ENCODE measurements at regions of chr17 and their contacts with region 1.

Region 1: GRCh38 chr17:28644985-28645939 is at the start of gene BLTP2:
- DNase-seq: peak; percentile 96
- H3K4me3 Mint-ChIP-seq: peak within 1 kb of the TSS; percentile 84
- H3K27ac Mint-ChIP-seq: peak within 1 kb of the TSS; percentile 86
- H3K4me1 Mint-ChIP-seq: peaks cover 36% of the 10 kb centered on the region
- H3K27me3 Mint-ChIP-seq: no peaks in the 10 kb centered on the region
- total RNA-seq, gene BLTP2: 89.4 to 92.0 TPM

Region 2: GRCh38 chr17:28384281-28385036 is 260.8 kb before region 1 on chr17:
- CTCF ChIA-PET with region 1: no interaction called
- intact Hi-C with region 1: loop called (anchors 1 kb)
- DNase-seq: peak; percentile 81
- H3K4me3 Mint-ChIP-seq: peak overlapping the region; percentile 87
- H3K27ac Mint-ChIP-seq: peak overlapping the region; percentile 9
- H3K4me1 Mint-ChIP-seq: peaks cover 23% of the 10 kb centered on the region
- H3K27me3 Mint-ChIP-seq: peaks cover 12% of the 10 kb centered on the region

Region 3: DNA sequence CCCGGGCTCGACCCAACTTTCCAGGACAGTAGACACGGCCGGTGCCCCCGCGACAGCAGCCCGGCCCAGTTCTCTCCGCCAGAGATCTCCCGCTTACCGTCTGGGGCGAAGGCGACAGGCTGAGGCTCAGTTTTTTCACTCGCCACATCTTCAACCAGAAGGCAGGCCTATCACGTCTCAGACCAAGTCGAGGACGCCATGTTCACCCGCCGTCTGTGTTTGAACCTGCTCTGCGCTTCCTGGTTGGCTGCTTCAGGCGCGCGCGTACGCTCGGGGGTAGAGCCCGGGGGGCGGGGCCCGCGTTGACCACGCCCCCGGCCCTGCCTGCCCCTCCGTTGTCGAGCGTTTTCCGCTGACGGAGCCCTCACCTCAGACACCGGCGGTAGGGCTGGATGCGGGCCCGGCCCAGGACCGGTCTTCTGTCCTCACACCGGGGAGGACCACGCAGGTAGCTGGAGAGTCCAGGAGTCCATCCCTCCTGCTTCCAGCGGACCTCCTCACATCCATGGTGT is 46.4 kb before region 1 on chr17 and contains the start of gene SPAG5:
- CTCF ChIA-PET with region 1: interaction called, 5 read pairs
- intact Hi-C with region 1: loop called (anchors 1 kb)
- DNase-seq: peak; percentile 96
- H3K4me3 Mint-ChIP-seq: peak within 1 kb of the TSS; percentile 95
- H3K27ac Mint-ChIP-seq: peak within 1 kb of the TSS; percentile 94
- H3K4me1 Mint-ChIP-seq: peaks cover 15% of the 10 kb centered on the region
- H3K27me3 Mint-ChIP-seq: no peaks in the 10 kb centered on the region
- total RNA-seq, gene SPAG5: 210 to 216 TPM

Region 4: DNA sequence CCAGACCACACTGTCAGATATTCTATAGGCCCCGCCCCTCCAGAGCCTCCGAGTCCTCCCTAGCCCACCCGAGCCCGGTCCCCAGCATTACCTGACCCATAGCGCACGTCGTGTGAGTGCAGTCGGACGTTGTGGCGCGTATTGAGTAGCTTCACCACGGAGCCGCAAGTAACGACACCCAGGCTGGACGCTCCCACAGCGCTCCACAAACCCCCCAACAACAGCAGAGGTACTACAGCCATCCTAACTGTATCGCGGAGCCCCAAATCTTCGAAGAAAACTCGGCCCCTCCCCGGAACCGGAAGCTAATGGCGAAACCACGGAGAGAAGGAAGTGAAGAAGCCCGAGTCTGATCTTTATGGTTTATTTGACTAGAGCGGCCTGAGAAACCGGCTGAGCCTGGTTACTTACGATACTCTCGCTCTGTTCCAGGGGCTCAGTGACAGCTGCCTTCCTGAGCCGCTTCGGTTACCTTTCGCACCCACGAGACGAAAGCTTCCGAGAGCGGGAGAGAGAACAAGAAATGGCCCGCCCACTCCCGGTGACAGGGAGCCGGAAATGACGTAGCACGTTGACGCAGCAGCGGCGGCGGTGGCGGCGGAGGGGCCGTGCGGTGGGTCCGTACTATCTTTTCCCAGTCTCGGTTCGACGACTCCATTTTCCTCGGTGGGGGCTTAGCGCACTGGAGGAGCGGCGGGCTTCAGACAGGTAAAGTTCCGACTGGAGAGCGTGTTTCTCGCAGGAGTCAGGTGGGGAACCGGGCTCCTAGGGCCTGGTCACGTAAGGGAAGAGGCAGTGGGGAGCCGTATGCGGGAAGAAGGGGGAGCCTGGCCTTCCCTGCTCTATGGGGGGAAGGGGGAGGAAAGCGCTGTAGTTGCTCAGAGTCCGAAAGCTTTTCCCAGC is 16.6 kb after region 1 on chr17 and contains the starts of genes SDF2 and SUPT6H:
- CTCF ChIA-PET with region 1: interaction called, 56 read pairs
- intact Hi-C with region 1: loop called (anchors 1 kb)
- DNase-seq: peak; percentile 97
- H3K4me3 Mint-ChIP-seq: peak within 1 kb of the TSS; percentile 98
- H3K27ac Mint-ChIP-seq: peak within 1 kb of the TSS; percentile 100
- H3K4me1 Mint-ChIP-seq: peaks cover 53% of the 10 kb centered on the region
- H3K27me3 Mint-ChIP-seq: no peaks in the 10 kb centered on the region
- total RNA-seq, gene SDF2: 30.3 to 30.9 TPM
- total RNA-seq, gene SUPT6H: 50.8 to 52.1 TPM

Region 5: DNA sequence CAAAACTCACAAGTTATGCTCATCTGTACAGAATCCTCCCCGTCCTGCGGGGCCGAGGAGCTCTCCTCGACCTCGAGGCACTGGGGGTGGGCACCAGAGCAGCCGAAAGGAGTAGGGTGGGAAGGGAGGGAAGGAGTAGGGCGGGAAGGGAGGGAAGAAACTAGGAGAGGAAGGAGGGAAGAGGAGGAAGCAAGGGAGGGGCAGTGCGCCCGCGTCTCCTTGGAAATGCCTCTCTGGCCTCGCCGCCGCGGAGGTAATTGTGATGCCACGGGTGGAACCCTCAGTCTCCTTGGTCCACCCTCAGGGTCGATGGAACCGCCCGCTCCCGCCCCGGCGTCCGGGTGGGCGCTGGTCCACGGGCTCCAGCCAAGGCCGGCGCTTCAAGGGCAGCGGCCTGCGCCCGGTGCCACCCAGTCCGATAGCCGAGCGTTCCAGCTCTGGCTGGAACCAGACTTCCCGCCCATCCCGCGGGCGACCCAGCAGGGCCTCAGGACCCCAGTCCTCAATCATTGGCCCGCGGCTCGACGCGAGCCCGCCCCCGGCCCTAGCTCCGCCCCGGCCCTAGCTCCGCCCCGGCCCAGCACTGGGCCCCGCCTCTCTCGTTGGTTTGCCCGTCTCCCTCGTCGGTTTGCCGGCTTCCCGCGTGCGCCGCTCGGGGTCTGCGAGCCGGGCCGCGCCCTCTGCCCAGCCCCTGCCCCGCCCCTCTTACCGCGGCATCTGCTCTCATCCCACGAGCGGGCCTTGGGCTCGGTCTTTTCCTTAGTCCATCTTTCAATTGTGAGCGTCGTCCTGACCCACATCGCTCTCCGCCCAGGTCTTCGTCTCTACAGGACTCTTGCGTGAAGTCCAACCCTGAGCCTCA is 65.8 kb after region 1 on chr17:
- CTCF ChIA-PET with region 1: interaction called, 7 read pairs
- intact Hi-C with region 1: loop called (anchors 2 kb)
- DNase-seq: peak; percentile 92
- H3K4me3 Mint-ChIP-seq: peak overlapping the region; percentile 79
- H3K27ac Mint-ChIP-seq: peak overlapping the region; percentile 79
- H3K4me1 Mint-ChIP-seq: peaks cover 17% of the 10 kb centered on the region
- H3K27me3 Mint-ChIP-seq: peaks cover 16% of the 10 kb centered on the region

Region 6: DNA sequence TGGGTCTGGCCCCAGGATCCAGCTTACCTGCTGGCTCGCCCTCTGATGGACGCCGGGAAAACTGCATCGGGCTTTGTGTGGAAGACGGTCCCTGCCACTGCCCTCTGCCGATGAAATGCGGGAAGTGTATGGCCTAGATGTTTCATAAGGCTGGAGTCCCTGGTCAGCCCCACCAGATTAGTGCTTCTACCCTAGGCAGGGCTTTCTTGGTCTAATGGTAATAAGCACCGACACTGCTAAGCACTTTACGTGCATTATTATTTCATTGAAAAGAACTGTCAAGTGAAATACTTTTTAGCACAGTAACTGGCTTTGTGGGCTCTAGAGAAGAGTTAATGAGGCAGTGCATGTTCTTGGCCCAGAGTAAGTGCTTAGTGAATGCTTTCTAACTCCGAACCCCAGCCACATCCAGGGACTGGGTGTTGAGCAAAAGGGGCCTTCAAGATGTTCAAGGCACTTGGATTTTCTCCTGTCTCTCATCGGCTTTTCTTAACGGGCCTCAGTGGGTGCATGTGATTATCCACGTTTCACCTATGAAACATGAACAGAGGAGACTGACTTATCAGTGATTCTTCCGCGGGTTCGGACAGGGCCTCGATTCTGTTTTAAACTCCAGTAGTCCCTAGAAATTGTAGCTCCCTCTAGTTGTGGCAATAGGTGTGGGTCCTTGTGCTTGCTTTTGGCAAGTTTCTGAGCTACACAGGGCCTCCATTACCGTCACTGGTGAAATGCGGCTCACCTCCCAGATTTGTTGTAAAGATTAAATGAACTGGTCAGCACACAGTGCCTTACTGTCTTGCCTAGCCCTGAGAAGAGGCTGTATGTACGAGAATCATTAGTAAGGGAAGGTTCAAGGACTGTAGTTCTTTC is 105.2 kb after region 1 on chr17:
- CTCF ChIA-PET with region 1: interaction called, 20 read pairs
- intact Hi-C with region 1: loop called (anchors 1 kb)
- DNase-seq: peak; percentile 96
- H3K4me3 Mint-ChIP-seq: peak overlapping the region; percentile 6
- H3K27ac Mint-ChIP-seq: peak overlapping the region; percentile 71
- H3K4me1 Mint-ChIP-seq: peaks cover 38% of the 10 kb centered on the region
- H3K27me3 Mint-ChIP-seq: no peaks in the 10 kb centered on the region

Measured in activated naive CD4-positive, alpha-beta T cell treated with anti-CD3 and anti-CD28 coated beads for 36 hours (primary cell).